ENCODE measurements at regions of chr22 and their contacts with region 1.

Region 1: GRCh38 chr22:50260801-50261614 is 475 bp downstream of the MAPK12 start:
- DNase-seq: peak in 1 of 6 donors; percentile 80
- ATAC-seq: peak in 3 of 4 donors; percentile 28 to 58 (median 42)
- H3K4me3 ChIP-seq: peak overlapping the region; percentile 2 to 43 (median 22)
- H3K27ac ChIP-seq: no peak overlapping the region
- H3K4me1 ChIP-seq: no peaks in the 10 kb centered on the region
- H3K27me3 ChIP-seq: no peaks in the 10 kb centered on the region
- CTCF ChIP-seq: no peak

Region 2: DNA sequence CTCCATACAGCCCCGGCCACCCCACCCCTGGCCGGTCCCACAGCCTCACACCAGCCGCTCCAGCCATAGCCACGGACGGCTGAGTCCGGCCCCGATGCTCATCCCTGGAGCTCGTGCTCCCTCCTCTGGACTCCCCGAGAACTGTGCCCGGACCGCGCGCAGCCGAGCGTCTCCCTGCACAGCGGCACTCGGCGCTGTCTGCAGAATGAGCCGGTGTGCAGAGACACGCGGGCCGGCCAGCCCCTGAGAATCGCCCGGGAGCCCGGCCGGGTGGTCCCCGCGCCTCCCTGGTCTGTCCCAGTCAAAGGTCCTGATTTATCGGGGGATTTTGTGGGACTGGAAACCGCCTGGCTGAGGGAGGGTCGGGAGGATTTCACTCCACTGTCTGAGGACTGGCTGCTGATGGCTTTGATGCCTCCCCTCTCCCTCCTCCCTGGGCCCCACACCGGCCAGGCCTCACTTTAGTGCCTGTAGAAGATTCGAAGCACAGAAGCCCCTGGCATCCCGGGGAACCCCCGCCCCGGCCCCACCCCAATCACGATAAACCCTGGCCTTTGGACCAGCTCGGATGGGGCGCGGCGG is 536.0 kb before region 1 on chr22:
- intact Hi-C with region 1: no loop called
- DNase-seq: peak; percentile 17 to 85 (median 42)
- ATAC-seq: peak; percentile 60 to 93 (median 90)
- H3K4me3 ChIP-seq: peak overlapping the region in 1 of 4 donors; percentile 21
- H3K27ac ChIP-seq: no peak overlapping the region
- H3K4me1 ChIP-seq: no peaks in the 10 kb centered on the region
- H3K27me3 ChIP-seq: peaks cover 0 to 30% (median 0%) of the 10 kb centered on the region in 4 donors
- CTCF ChIP-seq: peak in 3 of 4 donors; percentile 16 to 42 (median 25)

Region 3: GRCh38 chr22:50200461-50201190 is 60.4 kb before region 1 on chr22 and contains the start of gene SELENOO:
- intact Hi-C with region 1: no loop called
- DNase-seq: peak; percentile 87 to 96 (median 93)
- ATAC-seq: peak; percentile 89 to 92 (median 90)
- H3K4me3 ChIP-seq: peak within 1 kb of the TSS; percentile 61 to 86 (median 82)
- H3K27ac ChIP-seq: peak within 1 kb of the TSS; percentile 45 to 64 (median 59)
- H3K4me1 ChIP-seq: peaks cover 0 to 13% (median 6%) of the 10 kb centered on the region in 3 donors
- H3K27me3 ChIP-seq: no peaks in the 10 kb centered on the region
- CTCF ChIP-seq: no peak
- total RNA-seq, gene SELENOO: 11.6 to 17.8 (median 13.0) TPM

Region 4: GRCh38 chr22:50612528-50613221 is 351.7 kb after region 1 on chr22:
- intact Hi-C with region 1: loop called in 1 of 3 experiments (anchors 10 kb)
- DNase-seq: peak in 1 of 6 donors; percentile 12
- ATAC-seq: peak in 3 of 4 donors; percentile 58 to 64 (median 60)
- H3K4me3 ChIP-seq: no peak overlapping the region
- H3K27ac ChIP-seq: no peak overlapping the region
- H3K4me1 ChIP-seq: no peaks in the 10 kb centered on the region
- H3K27me3 ChIP-seq: no peaks in the 10 kb centered on the region
- CTCF ChIP-seq: no peak